T-cell (primary cell): ENCODE measurements at regions of chr12 and their contacts with region 1.

Region 1: GRCh38 chr12:31736472-31736871 is 7.7 kb upstream of the AMN1 start:
- DNase-seq: peak in 34 of 35 experiments; percentile 31 to 84 (median 62)
- ATAC-seq: peak; percentile 90 to 96 (median 90)
- H3K4me3 ChIP-seq: no peak overlapping the region
- H3K4me3 Mint-ChIP-seq: peak overlapping the region in 1 of 3 donors; percentile 55
- H3K27ac ChIP-seq: peak overlapping the region; percentile 63
- H3K27ac Mint-ChIP-seq: peak overlapping the region; percentile 86 to 92
- H3K4me1 ChIP-seq: peaks cover 25 to 50% of the 10 kb centered on the region in 2 experiments
- H3K4me1 Mint-ChIP-seq: peaks cover 59 to 68% (median 64%) of the 10 kb centered on the region in 3 donors
- H3K27me3 ChIP-seq: no peaks in the 10 kb centered on the region
- H3K27me3 Mint-ChIP-seq: no peaks in the 10 kb centered on the region

Region 2: DNA sequence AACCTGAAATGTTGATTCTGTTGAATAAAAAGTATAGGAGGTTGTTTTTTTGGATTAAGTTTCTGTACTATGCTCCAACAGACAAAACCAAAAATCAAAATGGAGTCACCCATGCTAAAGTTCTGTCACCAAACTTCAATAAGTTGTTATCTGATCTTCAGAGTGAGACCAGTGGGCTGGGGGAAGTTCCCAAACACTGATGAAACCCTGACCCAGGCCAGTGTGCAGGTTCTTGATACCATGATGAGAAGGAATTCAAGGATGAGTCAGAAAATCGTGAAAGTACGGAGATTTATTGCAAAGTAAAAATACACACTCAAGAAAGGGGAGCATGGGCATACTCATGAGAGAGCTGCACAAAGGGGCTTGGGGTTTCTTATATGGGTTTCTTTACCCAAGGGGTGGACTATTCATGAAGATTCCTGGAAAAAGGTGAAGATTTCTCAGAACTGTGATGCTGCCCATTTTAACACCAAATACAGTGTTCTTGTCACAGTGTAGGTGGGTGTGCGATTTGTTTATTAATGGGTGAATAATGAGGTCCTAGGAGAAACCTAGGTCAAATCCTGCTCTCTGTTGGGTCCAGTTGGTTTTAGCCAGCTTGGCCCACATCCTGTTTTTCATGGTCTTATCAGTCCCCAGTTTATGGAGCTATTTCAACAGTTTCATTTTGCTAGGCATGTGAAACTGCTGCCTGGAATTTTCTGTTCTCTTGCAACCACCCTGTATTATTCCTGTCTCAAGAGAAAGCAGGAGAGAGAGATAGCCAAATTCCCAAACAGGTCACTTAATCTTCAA is 118.0 kb before region 1 on chr12:
- CTCF ChIA-PET with region 1: no interaction called
- POLR2A ChIA-PET with region 1: no interaction called
- DNase-seq: no peak
- ATAC-seq: no peak
- H3K4me3 ChIP-seq: no peak overlapping the region
- H3K4me3 Mint-ChIP-seq: no peak overlapping the region
- H3K27ac ChIP-seq: no peak overlapping the region
- H3K27ac Mint-ChIP-seq: no peak overlapping the region
- H3K4me1 ChIP-seq: no peaks in the 10 kb centered on the region
- H3K4me1 Mint-ChIP-seq: no peaks in the 10 kb centered on the region
- H3K27me3 ChIP-seq: peaks cover 0 to 11% of the 10 kb centered on the region in 2 experiments
- H3K27me3 Mint-ChIP-seq: peaks cover 2 to 3% of the 10 kb centered on the region in 2 donors

Region 3: DNA sequence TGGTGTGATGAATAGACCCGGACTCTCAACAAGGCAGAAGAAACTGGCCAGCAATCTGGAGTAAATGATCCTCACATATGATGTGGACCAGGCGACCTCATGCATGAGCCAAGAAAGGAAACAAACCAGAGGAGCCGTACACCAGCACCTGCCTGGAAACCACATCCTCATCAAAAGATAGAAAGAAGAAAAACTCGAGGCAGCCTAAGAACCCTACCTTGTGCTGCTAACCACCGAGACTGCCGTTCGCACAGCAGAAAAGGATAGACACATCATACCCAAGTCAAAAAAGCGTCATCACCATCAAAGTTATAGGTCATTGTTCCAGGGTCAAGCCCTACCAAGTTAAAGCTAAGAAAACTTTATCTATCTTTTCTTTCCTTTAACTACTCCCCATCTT is 289.4 kb after region 1 on chr12:
- CTCF ChIA-PET with region 1: no interaction called
- POLR2A ChIA-PET with region 1: interaction called in 1 of 2 experiments, 14 read pairs
- DNase-seq: peak; percentile 20 to 78 (median 47)
- ATAC-seq: peak; percentile 96 to 100 (median 99)
- H3K4me3 ChIP-seq: no peak overlapping the region
- H3K4me3 Mint-ChIP-seq: peak overlapping the region in 2 of 3 donors; percentile 3 to 28
- H3K27ac ChIP-seq: peak overlapping the region; percentile 45
- H3K27ac Mint-ChIP-seq: peak overlapping the region; percentile 56 to 67
- H3K4me1 ChIP-seq: peaks cover 20 to 24% of the 10 kb centered on the region in 2 experiments
- H3K4me1 Mint-ChIP-seq: peaks cover 25 to 26% (median 25%) of the 10 kb centered on the region in 3 donors
- H3K27me3 ChIP-seq: no peaks in the 10 kb centered on the region
- H3K27me3 Mint-ChIP-seq: no peaks in the 10 kb centered on the region